ENCODE measurements at regions of chr3 and their contacts with region 1.

Region 1: GRCh38 chr3:179562591-179563270 is at the start of gene ACTL6A:
- DNase-seq: peak; percentile 99
- H3K4me3 Mint-ChIP-seq: peak within 1 kb of the TSS; percentile 96
- H3K27ac Mint-ChIP-seq: peak within 1 kb of the TSS; percentile 88
- H3K4me1 Mint-ChIP-seq: peaks cover 36% of the 10 kb centered on the region
- H3K27me3 Mint-ChIP-seq: peaks cover 15% of the 10 kb centered on the region
- total RNA-seq, gene ACTL6A: 75.1 to 81.3 TPM

Region 2: GRCh38 chr3:179015551-179016020 is 547.1 kb before region 1 on chr3:
- CTCF ChIA-PET with region 1: interaction called, 14 read pairs
- POLR2A ChIA-PET with region 1: interaction called, 3 read pairs
- DNase-seq: peak; percentile 67
- H3K4me3 Mint-ChIP-seq: no peak overlapping the region
- H3K27ac Mint-ChIP-seq: peak overlapping the region; percentile 45
- H3K4me1 Mint-ChIP-seq: peaks cover 40% of the 10 kb centered on the region
- H3K27me3 Mint-ChIP-seq: peaks cover 10% of the 10 kb centered on the region

Region 3: DNA sequence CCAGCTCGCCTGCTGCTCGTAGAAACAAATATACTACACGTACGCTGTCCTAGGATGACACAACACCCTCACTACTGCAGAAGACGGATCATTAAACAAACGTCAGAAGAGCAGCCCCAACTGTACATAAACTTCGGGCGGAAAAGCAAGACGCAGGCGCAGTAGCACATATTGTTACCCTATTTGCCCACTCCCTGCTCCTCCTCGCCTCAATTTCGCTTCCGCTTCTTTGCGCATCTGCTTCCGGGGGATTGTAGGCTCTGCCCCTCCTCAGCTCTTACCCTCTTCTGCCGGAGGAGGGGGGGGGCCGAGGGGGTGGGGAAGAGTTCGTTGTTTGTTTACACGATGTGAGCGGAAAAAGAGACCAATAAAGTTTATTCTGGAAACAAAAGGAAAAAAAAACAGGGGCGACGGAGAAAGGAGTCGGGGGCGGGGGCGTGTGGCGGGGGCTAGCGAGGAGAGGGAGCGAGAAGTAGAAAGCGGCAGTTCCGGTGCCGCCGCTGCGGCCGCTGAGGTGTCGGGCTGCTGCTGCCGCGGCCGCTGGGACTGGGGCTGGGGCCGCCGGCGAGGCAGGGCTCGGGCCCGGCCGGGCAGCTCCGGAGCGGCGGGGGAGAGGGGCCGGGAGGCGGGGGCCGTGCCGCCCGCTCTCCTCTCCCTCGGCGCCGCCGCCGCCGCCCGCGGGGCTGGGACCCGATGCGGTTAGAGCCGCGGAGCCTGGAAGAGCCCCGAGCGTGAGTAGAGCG is 414.7 kb before region 1 on chr3 and contains the start of gene PIK3CA:
- CTCF ChIA-PET with region 1: interaction called, 5 read pairs
- POLR2A ChIA-PET with region 1: interaction called, 15 read pairs
- DNase-seq: peak; percentile 96
- H3K4me3 Mint-ChIP-seq: peak within 1 kb of the TSS; percentile 95
- H3K27ac Mint-ChIP-seq: peak within 1 kb of the TSS; percentile 92
- H3K4me1 Mint-ChIP-seq: peaks cover 32% of the 10 kb centered on the region
- H3K27me3 Mint-ChIP-seq: peaks cover 22% of the 10 kb centered on the region
- total RNA-seq, gene PIK3CA: 25.9 to 26.2 TPM

Region 4: GRCh38 chr3:179604321-179605078 is 41.8 kb after region 1 on chr3 and contains the starts of genes MRPL47 and NDUFB5:
- CTCF ChIA-PET with region 1: interaction called, 4 read pairs
- POLR2A ChIA-PET with region 1: interaction called, 14 read pairs
- DNase-seq: peak; percentile 94
- H3K4me3 Mint-ChIP-seq: peak within 1 kb of the TSS; percentile 99
- H3K27ac Mint-ChIP-seq: peak within 1 kb of the TSS; percentile 96
- H3K4me1 Mint-ChIP-seq: peaks cover 59% of the 10 kb centered on the region
- H3K27me3 Mint-ChIP-seq: no peaks in the 10 kb centered on the region
- total RNA-seq, gene MRPL47: 34.8 to 36.0 TPM
- total RNA-seq, gene NDUFB5: 102 to 110 TPM